A549 (cell line): ENCODE measurements at regions of chr17 and their contacts with region 1.

Region 1: DNA sequence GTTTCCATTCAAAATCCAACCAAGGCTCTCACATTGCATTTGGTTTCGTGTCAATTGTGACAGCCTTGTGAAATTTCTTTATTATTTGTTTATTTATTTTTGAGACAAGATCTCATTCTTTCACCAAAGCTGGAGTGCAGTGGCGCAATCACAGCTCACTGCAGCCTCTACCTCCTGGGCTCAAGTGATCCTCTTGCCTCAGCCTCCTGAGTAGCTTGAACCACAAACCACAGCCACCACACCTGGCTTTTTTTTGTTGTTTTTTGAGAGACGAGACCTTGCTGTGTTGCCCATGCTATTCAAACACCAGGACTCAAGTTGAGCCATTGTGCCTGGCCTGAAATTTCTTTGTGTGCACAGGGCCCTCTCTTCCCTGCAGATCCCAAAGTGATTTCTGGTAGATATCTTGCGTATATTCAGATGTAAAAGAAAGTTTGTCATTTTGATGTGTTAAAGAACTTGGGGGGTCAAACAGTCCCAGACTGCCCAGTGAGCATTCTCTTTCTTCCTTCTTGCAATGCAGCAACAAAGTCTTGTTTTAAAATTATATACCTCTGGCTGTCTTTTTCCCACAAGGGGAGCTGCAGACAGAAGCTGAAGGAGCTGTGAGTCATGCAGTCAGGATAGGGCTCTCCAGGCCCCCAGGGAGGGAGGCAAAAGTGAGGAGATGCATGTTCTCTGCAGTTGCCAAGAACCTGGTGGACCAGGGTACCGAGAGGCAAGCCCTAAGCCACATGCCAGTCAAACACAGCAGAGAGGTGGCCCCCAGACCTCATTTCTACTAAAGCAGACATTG is 15.5 kb upstream of the USP22 start:
- DNase-seq: peak in 1 of 2 experiments; percentile 47
- ATAC-seq: peak; percentile 78 to 79
- H3K4me3 ChIP-seq: no peak overlapping the region
- H3K27ac ChIP-seq: no peak overlapping the region
- H3K4me1 ChIP-seq: no peaks in the 10 kb centered on the region
- CTCF ChIP-seq: no peak
- EP300 ChIP-seq: no peak
- POLR2A ChIP-seq: no peak
- RAD21 ChIP-seq: no peak

Region 2: DNA sequence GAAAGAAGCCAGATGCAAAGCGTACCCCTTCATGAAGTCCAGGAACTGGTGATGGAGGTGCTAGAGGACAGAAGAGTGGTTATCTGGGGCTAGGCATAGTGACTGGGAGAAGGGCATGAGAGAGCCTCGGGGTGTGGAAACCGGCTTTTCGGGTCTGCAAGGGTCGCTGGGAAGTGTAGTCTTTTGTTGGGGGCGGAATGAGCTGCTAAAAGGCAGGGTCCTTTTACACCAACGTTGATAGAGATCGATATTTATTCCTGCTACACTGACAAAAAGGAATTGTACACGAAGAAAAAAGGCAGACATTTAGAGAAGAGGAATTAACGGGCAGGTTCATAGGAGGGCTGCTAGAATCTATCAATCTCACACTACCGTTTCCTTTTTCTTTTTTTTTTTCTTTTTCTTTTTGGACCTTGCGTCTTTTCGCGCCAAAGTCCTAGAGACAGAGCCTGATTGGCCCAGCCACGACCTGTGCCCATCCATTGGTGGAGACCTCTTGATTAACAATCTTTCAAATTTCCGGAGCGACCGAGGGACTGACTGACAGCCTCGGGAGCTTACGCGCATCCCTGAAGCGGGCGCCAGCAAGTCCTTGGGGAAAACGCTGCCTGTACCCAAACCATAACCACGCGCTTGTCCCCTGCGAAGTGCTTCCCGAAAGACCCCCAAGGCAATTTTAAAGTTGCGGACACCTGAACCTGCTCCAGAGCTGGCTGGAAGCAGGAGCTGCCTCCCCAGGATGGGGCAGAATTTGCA is 40.8 kb after region 1 on chr17:
- CTCF ChIA-PET with region 1: interaction called, 10 read pairs
- POLR2A ChIA-PET with region 1: no interaction called
- DNase-seq: peak; percentile 94 to 98
- ATAC-seq: peak; percentile 99
- H3K4me3 ChIP-seq: peak overlapping the region; percentile 56
- H3K27ac ChIP-seq: peak overlapping the region; percentile 57 to 78; a peak in 5 of 6 replicates
- H3K4me1 ChIP-seq: 0 out of 3 replicates have a peak, but pooled peaks cover 4% of the 10 kb centered on the region
- CTCF ChIP-seq: no peak
- EP300 ChIP-seq: no peak
- POLR2A ChIP-seq: peak; percentile 32
- RAD21 ChIP-seq: no peak